ENCODE measurements at regions of chr2 and their contacts with region 1.

Region 1: GRCh38 chr2:207103132-207103531 is 62.6 kb downstream of the KLF7 start:
- DNase-seq: no peak
- H3K4me3 Mint-ChIP-seq: no peak overlapping the region
- H3K27ac Mint-ChIP-seq: no peak overlapping the region
- H3K4me1 Mint-ChIP-seq: peaks cover 13% of the 10 kb centered on the region
- H3K27me3 Mint-ChIP-seq: no peaks in the 10 kb centered on the region

Region 2: GRCh38 chr2:206971805-206972204 is 131.3 kb before region 1 on chr2:
- CTCF ChIA-PET with region 1: no interaction called
- POLR2A ChIA-PET with region 1: no interaction called
- DNase-seq: no peak
- H3K4me3 Mint-ChIP-seq: no peak overlapping the region
- H3K27ac Mint-ChIP-seq: no peak overlapping the region
- H3K4me1 Mint-ChIP-seq: no peaks in the 10 kb centered on the region
- H3K27me3 Mint-ChIP-seq: peaks cover 2% of the 10 kb centered on the region

Region 3: DNA sequence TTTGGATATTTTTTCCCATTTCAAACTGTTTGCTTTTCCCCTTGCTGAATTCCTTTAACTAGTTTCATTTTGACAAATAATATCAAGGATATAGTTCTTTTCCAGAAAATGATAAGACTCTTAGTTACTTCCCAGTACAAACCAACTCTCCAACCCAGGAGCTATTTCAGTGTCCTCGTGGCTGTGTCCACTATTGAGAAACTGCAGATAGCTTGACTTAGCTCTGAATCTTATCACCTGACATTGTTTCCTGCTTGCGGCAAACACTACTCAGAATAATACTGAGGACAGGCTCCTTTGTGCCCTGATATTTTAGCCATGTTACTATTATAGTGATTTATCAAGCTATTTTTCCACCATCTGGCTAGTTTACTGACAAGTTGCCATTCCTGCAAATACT is 12.0 kb before region 1 on chr2:
- CTCF ChIA-PET with region 1: no interaction called
- POLR2A ChIA-PET with region 1: no interaction called
- DNase-seq: no peak
- H3K4me3 Mint-ChIP-seq: no peak overlapping the region
- H3K27ac Mint-ChIP-seq: no peak overlapping the region
- H3K4me1 Mint-ChIP-seq: peaks cover 39% of the 10 kb centered on the region
- H3K27me3 Mint-ChIP-seq: no peaks in the 10 kb centered on the region

Region 4: GRCh38 chr2:207311316-207312005 is 208.3 kb after region 1 on chr2:
- CTCF ChIA-PET with region 1: no interaction called
- POLR2A ChIA-PET with region 1: interaction called, 11 read pairs
- DNase-seq: no peak
- H3K4me3 Mint-ChIP-seq: no peak overlapping the region
- H3K27ac Mint-ChIP-seq: no peak overlapping the region
- H3K4me1 Mint-ChIP-seq: peaks cover 27% of the 10 kb centered on the region
- H3K27me3 Mint-ChIP-seq: no peaks in the 10 kb centered on the region